ENCODE measurements at regions of chr6 and their contacts with region 1.

Region 1: DNA sequence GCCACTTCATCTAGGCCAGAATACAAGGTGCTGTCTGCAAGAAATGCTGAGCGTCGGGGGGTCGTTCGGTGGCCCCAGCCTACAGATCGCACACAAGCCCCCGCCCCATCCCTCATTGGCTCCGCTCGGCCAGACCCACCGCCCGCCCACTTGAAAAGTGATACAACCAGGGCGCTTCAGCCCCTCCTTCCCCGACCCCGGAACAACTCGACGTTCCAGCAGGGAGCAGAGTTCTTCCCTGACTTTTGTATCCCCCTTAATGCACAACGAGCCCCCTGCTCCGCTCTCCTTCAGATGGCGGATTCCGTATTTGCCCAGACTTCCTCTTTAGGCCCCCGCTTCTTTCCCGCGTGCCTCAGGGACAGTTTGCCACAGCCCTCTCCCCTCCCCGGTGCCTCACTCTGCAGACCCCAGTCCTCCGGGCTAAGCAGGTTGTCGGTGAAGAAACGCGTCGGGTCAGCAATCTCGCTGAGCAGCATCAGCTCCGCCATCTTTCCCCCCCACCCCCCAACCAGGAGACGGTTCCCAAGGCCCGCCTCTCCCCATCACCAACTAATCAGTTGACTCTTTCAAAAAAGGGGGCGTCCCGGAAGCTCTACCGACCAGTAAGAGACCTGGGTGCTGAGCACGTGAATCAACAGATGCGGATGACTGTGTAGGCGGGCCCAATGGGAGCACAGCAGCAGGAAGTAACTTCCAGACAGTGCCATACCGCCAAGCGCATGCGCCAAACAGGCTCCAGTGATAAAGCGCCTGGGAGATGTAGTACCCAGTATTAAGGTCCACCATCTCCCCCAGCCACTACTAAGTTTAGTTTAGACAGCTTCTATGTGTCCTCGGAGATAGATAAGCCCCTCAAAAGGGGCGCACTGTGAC is at the start of gene ATF6B:
- DNase-seq: peak; percentile 99
- ATAC-seq: peak; percentile 96 to 97
- H3K4me3 ChIP-seq: peak within 1 kb of the TSS; percentile 98
- H3K27ac ChIP-seq: peak within 1 kb of the TSS; percentile 97
- H3K4me1 ChIP-seq: peaks cover 21% of the 10 kb centered on the region
- H3K27me3 ChIP-seq: no peaks in the 10 kb centered on the region
- total RNA-seq, gene ATF6B: 35.2 to 44.9 (median 38.5) TPM

Region 2: DNA sequence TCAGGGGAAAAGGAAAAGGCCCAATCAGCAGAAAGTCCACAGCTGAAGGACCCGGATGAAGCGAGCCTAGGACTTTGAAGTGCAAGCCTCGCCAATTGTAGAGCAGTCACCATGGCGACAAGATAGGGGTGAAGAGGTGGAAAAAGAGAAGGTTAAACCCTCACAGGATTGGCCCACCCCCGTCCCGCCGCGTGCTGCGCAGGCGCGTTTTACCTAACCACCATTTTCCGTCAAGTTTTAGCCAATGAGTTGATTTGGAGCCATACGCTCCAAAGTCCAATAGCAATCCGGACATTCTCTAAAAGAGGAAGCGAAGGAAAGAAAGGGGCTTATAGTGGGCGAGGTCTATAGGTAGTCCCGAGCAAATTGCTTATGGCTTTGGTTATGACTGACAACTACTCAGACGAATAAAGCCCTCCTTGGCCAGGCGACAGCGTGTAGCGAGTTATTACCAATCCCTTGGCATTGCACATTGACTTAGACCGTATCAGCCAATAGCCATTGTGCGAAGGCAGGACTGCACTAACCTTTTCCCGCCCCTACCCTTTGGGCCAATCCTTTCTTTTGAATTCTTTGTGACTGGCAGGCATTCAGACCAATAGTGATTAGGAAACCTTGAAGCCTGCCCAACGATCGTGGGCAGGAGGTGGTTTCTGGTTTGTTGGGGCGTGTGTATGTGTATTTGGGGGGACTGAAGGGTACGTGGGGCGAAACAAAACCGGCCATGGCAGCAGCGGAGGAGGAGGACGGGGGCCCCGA is 50.0 kb after region 1 on chr6 and contains the start of gene RNF5:
- intact Hi-C with region 1: loop called in 1 of 4 experiments (anchors 10 kb)
- DNase-seq: peak; percentile 95 to 98 (median 96)
- ATAC-seq: peak; percentile 86 to 91
- H3K4me3 ChIP-seq: peak within 1 kb of the TSS; percentile 64
- H3K27ac ChIP-seq: peak within 1 kb of the TSS; percentile 98
- H3K4me1 ChIP-seq: peaks cover 4% of the 10 kb centered on the region
- H3K27me3 ChIP-seq: no peaks in the 10 kb centered on the region
- total RNA-seq, gene RNF5: 73.2 to 88.3 (median 76.7) TPM

Region 3: GRCh38 chr6:32195652-32195901 is 67.6 kb after region 1 on chr6:
- intact Hi-C with region 1: loop called in 1 of 4 experiments (anchors 5 kb)
- DNase-seq: peak; percentile 100
- ATAC-seq: peak; percentile 88 to 92
- H3K4me3 ChIP-seq: no peak overlapping the region
- H3K27ac ChIP-seq: no peak overlapping the region
- H3K4me1 ChIP-seq: peaks cover 5% of the 10 kb centered on the region
- H3K27me3 ChIP-seq: no peaks in the 10 kb centered on the region